ENCODE measurements at regions of chr10 and their contacts with region 1.

Region 1: GRCh38 chr10:77501152-77501845 is 136.3 kb downstream of the KCNMA1 start:
- DNase-seq: no peak
- ATAC-seq: peak in 1 of 4 experiments; percentile 12
- H3K4me3 ChIP-seq: no peak overlapping the region
- H3K4me3 Mint-ChIP-seq: no peak overlapping the region
- H3K27ac ChIP-seq: no peak overlapping the region
- H3K27ac Mint-ChIP-seq: no peak overlapping the region
- H3K4me1 ChIP-seq: no peaks in the 10 kb centered on the region
- H3K4me1 Mint-ChIP-seq: no peaks in the 10 kb centered on the region
- H3K27me3 ChIP-seq: peaks cover 0 to 19% of the 10 kb centered on the region in 2 experiments
- H3K27me3 Mint-ChIP-seq: peaks cover 2 to 5% of the 10 kb centered on the region in 2 donors

Region 2: DNA sequence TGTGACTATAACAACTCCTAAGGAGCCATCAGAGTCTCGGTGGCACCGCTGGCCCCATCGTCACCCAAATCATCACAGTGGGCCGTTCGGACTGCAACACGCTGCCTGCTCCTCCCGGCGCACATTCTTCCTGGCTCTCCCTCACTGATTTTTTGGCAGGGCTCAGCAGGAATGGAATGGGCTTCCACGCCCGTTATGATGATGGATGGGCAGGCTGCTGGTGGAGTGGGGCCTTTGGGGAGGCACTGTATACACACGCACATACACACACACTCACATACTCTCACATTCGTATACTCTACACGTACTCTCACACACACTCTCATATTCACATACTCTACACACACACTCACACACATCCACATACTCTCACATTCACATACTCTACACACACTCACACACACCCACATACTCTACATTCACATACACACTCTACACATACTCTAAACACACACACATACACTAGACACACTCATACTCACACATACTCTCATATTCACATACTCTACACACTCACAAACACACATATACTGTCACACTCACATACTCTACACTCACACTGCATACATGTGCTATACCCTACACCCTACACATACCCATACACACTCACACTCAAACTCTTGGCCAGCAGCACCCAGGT is 36.5 kb after region 1 on chr10:
- CTCF ChIA-PET with region 1: no interaction called
- POLR2A ChIA-PET with region 1: no interaction called
- DNase-seq: no peak
- ATAC-seq: no peak
- H3K4me3 ChIP-seq: no peak overlapping the region
- H3K4me3 Mint-ChIP-seq: no peak overlapping the region
- H3K27ac ChIP-seq: no peak overlapping the region
- H3K27ac Mint-ChIP-seq: no peak overlapping the region
- H3K4me1 ChIP-seq: no peaks in the 10 kb centered on the region
- H3K4me1 Mint-ChIP-seq: no peaks in the 10 kb centered on the region
- H3K27me3 ChIP-seq: peaks cover 0 to 3% of the 10 kb centered on the region in 2 experiments
- H3K27me3 Mint-ChIP-seq: peaks cover 7 to 13% of the 10 kb centered on the region in 2 donors

Region 3: DNA sequence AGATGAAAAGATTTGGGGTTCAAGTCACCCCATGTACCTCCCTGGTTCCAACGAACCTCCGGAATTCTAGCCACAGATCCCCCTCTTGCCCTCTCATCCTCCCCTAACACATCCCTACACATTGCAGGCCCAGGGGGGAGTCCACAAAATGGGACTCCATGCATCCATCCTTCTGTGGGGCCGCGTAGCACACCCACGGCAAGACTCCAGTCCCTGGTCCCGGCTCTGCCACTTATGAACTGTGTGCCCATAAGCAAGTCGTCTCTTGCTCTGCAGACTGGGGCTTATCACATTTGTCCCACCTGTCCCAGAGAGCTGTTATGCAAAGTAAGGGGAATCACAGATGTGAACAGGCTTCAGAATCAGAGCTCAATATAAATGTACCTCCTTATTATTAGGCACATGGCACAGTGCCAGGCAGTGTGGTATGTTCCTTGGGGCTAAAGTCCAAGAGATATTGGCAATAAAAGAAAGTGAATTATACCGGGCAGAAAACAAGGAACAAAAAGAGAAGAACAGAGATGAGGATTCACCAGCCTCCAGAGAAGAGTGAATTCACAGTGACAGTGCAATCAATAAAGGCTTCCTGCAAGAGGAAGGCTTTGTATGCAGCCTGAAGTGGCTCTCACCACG is 62.5 kb after region 1 on chr10:
- CTCF ChIA-PET with region 1: no interaction called
- POLR2A ChIA-PET with region 1: interaction called in 1 of 2 experiments, 11 read pairs
- DNase-seq: no peak
- ATAC-seq: no peak
- H3K4me3 ChIP-seq: no peak overlapping the region
- H3K4me3 Mint-ChIP-seq: no peak overlapping the region
- H3K27ac ChIP-seq: no peak overlapping the region
- H3K27ac Mint-ChIP-seq: no peak overlapping the region
- H3K4me1 ChIP-seq: no peaks in the 10 kb centered on the region
- H3K4me1 Mint-ChIP-seq: no peaks in the 10 kb centered on the region
- H3K27me3 ChIP-seq: peaks cover 4 to 20% of the 10 kb centered on the region in 2 experiments
- H3K27me3 Mint-ChIP-seq: peaks cover 16 to 20% of the 10 kb centered on the region in 2 donors

Measured in T-cell (primary cell).